Dorsolateral prefrontal cortex (tissue), 120 donors: ENCODE measurements at regions of chr17 and their contacts with region 1.

Region 1: GRCh38 chr17:18033442-18034099 is 5.4 kb downstream of the ATPAF2 start:
- DNase-seq: peak in 2 of 10 donors; percentile 50 to 55
- H3K4me3 ChIP-seq: no peak overlapping the region
- H3K27ac ChIP-seq: peak overlapping the region in 1 of 59 donors; percentile 16
- H3K27me3 ChIP-seq: no peaks in the 10 kb centered on the region
- CTCF ChIP-seq: peak; percentile 51 to 85 (median 69)

Region 2: GRCh38 chr17:17890773-17891759 is 142.5 kb before region 1 on chr17:
- intact Hi-C with region 1: loop called in 1 of 2 experiments (anchors 5 kb)
- DNase-seq: peak in 3 of 10 donors; percentile 32 to 59 (median 51)
- H3K4me3 ChIP-seq: no peak overlapping the region
- H3K27ac ChIP-seq: no peak overlapping the region
- H3K27me3 ChIP-seq: no peaks in the 10 kb centered on the region
- CTCF ChIP-seq: peak in 54 of 56 donors; percentile 16 to 73 (median 53)

Region 3: DNA sequence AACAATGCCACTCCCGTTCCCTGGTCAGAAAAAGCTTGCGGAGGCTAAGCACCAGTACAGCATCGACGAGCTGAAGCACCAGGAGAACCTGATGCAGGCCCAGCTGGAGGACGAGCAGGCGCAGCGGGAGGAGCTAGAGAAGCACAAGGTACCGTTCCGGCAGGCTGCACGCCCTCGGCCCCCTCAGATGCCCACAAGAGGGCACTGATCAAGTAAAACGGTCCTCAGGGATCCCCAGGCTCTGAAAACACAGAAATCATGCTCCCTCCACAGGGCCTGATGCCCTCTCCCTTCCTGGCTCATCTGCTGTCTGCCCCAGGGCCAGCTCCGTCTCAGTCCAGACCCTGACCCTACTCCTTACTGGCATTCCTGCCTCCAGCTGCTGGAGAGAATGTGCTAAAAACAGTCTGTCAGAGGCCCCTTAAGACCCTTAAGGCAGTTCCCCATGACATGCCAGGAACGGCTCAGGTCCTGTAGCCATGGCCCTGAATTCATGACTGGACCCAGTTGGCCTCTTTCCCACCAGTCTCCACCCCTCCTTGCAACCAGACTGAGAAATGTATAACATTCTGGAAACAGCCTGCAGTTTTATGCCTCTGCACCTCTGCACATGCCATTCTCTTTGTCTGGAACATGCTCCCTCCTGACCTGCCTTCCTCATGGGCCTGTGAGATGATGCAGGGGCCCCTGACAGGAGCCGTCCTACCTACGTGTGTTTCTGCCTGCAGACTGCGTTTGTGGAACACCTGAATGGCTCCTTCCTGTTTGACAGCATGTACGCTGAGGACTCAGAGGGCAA is 39.1 kb before region 1 on chr17:
- intact Hi-C with region 1: loop called in 1 of 2 experiments (anchors 5 kb)
- DNase-seq: peak in 2 of 10 donors; percentile 31 to 57
- H3K4me3 ChIP-seq: no peak overlapping the region
- H3K27ac ChIP-seq: peak overlapping the region in 1 of 59 donors; percentile 3
- H3K27me3 ChIP-seq: no peaks in the 10 kb centered on the region
- CTCF ChIP-seq: peak in 47 of 56 donors; percentile 9 to 60 (median 42)

Region 4: DNA sequence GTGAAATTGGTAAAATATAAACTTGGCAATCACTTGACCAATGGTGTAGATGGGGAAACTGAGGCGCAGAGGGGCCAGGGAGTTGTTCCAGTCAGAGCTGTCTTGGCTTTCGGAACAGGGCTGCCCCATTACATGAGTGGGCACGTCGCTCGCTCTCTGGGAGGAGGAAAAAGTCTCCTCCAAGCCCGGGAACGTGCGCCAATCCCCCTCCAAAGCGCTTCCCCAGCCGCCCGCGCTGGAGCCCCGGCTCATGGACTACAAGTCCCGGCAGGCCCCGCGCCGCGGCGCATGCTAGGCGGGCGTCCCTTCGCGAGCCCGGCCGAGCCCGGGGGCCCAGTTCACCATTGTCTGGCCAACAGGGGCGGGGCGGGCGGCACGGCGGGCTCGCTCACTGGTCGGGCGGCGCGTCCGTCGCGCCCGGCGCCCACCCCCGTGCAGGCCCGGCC is 191.6 kb after region 1 on chr17:
- intact Hi-C with region 1: no loop called
- DNase-seq: peak; percentile 92 to 98 (median 96)
- H3K4me3 ChIP-seq: peak overlapping the region in 58 of 59 donors; percentile 38 to 86 (median 56)
- H3K27ac ChIP-seq: peak overlapping the region in 40 of 59 donors; percentile 13 to 82 (median 56)
- H3K27me3 ChIP-seq: no peaks in the 10 kb centered on the region
- CTCF ChIP-seq: peak in 10 of 56 donors; percentile 8 to 29 (median 18)